Psoas muscle (tissue), 8 donors: ENCODE measurements at regions of chr1 and their contacts with region 1.

Region 1: DNA sequence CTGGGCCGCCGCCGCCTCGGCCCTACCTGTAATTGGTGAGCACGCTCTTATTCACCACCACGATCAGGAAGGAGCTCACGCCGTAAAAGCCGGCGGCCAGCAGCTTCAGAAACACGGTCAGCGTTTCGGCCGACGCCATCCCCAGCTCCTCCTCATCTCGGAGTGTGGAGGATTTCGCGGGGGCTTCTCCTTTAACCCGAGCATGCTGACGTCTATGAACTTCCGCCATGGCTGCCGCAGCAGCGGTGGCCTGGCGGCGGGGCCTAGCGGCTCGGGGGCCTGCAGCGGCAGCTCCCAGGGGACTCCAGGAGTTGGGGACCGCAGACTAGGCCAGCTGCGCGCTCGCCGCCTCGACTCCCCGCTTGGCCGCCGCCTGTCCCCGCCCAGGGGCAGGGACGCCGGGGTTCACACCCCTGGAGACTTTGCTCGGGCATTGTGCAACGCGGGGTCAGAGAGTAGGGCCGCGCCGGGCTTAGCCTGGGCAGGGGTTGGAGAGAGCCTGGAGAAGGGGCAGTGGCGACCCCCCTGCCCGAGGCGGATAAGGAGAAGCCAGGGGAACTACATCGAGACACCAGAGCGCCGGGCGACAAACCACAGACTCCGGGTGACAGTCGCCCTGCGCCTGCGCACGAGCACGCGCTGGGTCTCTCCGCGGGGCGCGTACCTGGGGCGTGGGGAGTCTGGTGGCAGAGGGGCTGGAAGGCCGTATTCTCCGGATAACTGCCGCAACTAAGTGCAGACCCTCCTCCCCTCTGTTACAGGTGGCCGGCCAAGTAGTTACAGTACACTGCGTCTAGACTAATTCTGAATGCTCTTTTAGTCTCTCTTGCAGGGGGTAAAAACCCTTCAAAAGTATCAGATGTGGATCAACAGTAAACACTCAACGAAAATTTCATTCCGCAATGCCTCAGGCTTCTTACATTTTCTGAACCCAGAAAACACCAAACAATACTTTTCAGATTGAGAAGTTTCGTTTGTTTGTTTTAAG is at the start of gene SLC35D1:
- DNase-seq: peak; percentile 82 to 88
- ATAC-seq: peak; percentile 75 to 87 (median 86)
- H3K4me3 ChIP-seq: peak within 1 kb of the TSS; percentile 96
- H3K27ac ChIP-seq: peak within 1 kb of the TSS; percentile 98
- H3K4me1 ChIP-seq: peaks cover 23% of the 10 kb centered on the region
- H3K27me3 ChIP-seq: no peaks in the 10 kb centered on the region
- CTCF ChIP-seq: no peak
- total RNA-seq, gene SLC35D1: 5.1 to 6.8 (median 6.3) TPM

Region 2: GRCh38 chr1:66929999-66930822 is 123.9 kb before region 1 on chr1:
- intact Hi-C with region 1: loop called (anchors 5 to 10 kb)
- DNase-seq: peak; percentile 96 to 97
- ATAC-seq: peak; percentile 88 to 91 (median 89)
- H3K4me3 ChIP-seq: peak overlapping the region; percentile 83
- H3K27ac ChIP-seq: peak overlapping the region; percentile 94
- H3K4me1 ChIP-seq: peaks cover 61% of the 10 kb centered on the region
- H3K27me3 ChIP-seq: no peaks in the 10 kb centered on the region
- CTCF ChIP-seq: peak; percentile 45

Region 3: GRCh38 chr1:67005068-67005467 is 49.0 kb before region 1 on chr1:
- intact Hi-C with region 1: loop called in 1 of 2 experiments (anchors 5 kb)
- DNase-seq: peak in 1 of 2 donors; percentile 64
- ATAC-seq: peak; percentile 13 to 63 (median 49)
- H3K4me3 ChIP-seq: no peak overlapping the region
- H3K27ac ChIP-seq: peak overlapping the region; percentile 28
- H3K4me1 ChIP-seq: peaks cover 12% of the 10 kb centered on the region
- H3K27me3 ChIP-seq: no peaks in the 10 kb centered on the region
- CTCF ChIP-seq: no peak